ENCODE measurements at regions of chr5 and their contacts with region 1.

Region 1: DNA sequence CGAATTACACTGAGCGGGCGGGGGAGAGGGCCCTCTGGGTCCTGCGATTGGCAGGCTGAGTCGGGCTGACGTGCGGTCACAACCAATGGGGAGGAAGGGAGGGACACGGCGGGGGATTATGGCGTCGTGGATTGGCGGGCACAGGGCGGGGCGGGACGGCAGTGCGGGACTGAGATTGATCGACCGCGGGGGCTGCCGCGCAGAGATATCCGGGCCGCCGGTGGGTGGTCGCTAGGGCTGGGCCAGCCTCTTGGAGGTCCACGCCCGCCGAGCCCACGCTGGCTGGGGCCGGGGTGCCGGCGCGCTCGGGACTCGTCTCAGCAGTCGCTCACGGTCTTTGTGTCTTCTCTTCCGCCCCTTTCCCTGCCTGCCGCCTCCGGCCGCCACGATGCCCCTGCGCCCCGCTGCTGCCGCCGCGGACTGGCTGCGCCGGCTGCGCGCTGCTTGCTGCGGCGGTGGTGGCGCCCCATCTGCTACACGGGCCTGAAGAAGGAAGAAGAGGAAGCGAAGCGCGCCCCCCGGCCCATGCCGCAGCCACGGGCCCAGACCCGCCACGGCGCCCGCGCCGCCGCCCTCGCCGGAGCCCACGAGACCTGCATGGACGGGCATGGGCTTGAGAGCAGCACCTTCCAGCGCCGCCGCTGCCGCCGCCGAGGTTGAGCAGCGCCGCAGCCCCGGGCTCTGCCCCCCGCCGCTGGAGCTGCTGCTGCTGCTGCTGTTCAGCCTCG is at the start of gene RGMB:
- DNase-seq: peak; percentile 96
- H3K4me3 Mint-ChIP-seq: peak within 1 kb of the TSS; percentile 99
- H3K27ac Mint-ChIP-seq: peak within 1 kb of the TSS; percentile 77
- H3K4me1 Mint-ChIP-seq: peaks cover 36% of the 10 kb centered on the region
- H3K27me3 Mint-ChIP-seq: peaks cover 10% of the 10 kb centered on the region
- total RNA-seq, gene RGMB: 5.0 to 5.9 TPM

Region 2: DNA sequence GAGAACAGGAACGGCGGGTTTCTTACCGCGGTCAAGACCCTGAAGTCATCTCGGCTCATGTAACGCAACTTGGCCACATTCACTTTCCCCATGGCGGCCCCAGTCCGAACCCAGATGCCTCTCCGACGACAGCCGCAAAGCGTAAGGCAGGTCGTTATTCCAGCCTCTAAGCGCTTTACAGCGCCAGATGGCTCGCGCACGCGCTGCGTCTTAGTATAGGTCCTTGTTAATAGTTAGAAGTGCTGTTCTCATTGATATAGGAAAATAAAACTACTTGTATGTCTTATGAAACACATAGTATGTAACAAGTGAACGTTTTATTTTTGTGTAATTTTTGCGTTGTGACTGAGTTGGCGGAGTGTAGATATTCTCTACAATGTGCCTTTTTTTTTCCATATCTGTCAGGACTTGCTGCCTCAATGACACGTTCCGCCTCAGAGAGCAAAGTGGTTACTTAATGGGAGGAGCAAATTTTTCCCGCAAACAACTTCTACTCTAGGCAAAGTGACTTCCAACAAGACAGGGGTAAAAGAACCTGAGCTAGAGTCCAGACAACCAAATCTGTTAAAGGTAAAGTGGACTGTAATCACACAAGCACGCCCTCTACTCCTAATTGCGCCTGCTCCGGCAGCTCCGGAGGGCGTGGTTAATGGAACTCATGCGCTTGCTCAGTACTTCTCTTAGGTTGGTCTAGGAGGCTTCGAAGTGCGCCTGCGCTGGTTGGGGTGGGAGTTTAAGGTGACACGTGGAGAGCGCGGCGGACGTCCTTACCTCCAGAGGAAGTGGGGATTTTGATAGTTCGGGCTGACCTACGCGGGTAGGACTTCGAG is 1590.3 kb before region 1 on chr5 and contains the start of gene RIOK2:
- CTCF ChIA-PET with region 1: interaction called, 4 read pairs
- intact Hi-C with region 1: loop called (anchors 1 kb)
- DNase-seq: peak; percentile 97
- H3K4me3 Mint-ChIP-seq: peak within 1 kb of the TSS; percentile 93
- H3K27ac Mint-ChIP-seq: peak within 1 kb of the TSS; percentile 99
- H3K4me1 Mint-ChIP-seq: peaks cover 33% of the 10 kb centered on the region
- H3K27me3 Mint-ChIP-seq: no peaks in the 10 kb centered on the region
- total RNA-seq, gene RIOK2: 29.1 to 32.0 TPM

Region 3: DNA sequence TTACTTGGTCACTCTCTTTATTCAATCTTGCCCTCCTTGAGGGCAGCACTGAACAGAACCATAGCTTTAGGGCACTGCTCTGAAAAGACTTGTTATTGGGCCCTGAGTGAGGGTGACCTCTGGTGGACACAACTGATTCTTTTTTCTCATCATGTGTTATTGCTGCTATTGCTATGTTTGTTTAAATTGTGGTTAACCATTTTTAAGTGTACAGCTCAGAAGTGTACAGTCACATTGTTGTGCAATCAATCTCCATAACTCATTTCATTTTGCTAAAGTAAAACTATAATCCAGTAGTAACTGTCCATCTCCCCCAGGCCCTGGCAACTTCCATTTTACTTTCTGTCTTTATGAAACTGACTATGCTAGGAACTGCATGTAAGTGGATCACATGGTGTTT is 1239.5 kb before region 1 on chr5:
- CTCF ChIA-PET with region 1: no interaction called
- intact Hi-C with region 1: loop called (anchors 5 kb)
- DNase-seq: peak; percentile 18
- H3K4me3 Mint-ChIP-seq: no peak overlapping the region
- H3K27ac Mint-ChIP-seq: no peak overlapping the region
- H3K4me1 Mint-ChIP-seq: no peaks in the 10 kb centered on the region
- H3K27me3 Mint-ChIP-seq: no peaks in the 10 kb centered on the region

Region 4: GRCh38 chr5:98069876-98070512 is 703.6 kb before region 1 on chr5:
- CTCF ChIA-PET with region 1: no interaction called
- intact Hi-C with region 1: loop called (anchors 5 kb)
- DNase-seq: no peak
- H3K4me3 Mint-ChIP-seq: no peak overlapping the region
- H3K27ac Mint-ChIP-seq: no peak overlapping the region
- H3K4me1 Mint-ChIP-seq: peaks cover 8% of the 10 kb centered on the region
- H3K27me3 Mint-ChIP-seq: peaks cover 6% of the 10 kb centered on the region

Region 5: GRCh38 chr5:98349251-98349995 is 424.2 kb before region 1 on chr5:
- CTCF ChIA-PET with region 1: no interaction called
- intact Hi-C with region 1: no loop called
- DNase-seq: no peak
- H3K4me3 Mint-ChIP-seq: no peak overlapping the region
- H3K27ac Mint-ChIP-seq: no peak overlapping the region
- H3K4me1 Mint-ChIP-seq: no peaks in the 10 kb centered on the region
- H3K27me3 Mint-ChIP-seq: peaks cover 2% of the 10 kb centered on the region

Region 6: GRCh38 chr5:98796197-98796972 is 22.8 kb after region 1 on chr5:
- CTCF ChIA-PET with region 1: interaction called, 155 read pairs
- intact Hi-C with region 1: loop called (anchors 1 kb)
- DNase-seq: peak; percentile 79
- H3K4me3 Mint-ChIP-seq: no peak overlapping the region
- H3K27ac Mint-ChIP-seq: no peak overlapping the region
- H3K4me1 Mint-ChIP-seq: peaks cover 1% of the 10 kb centered on the region
- H3K27me3 Mint-ChIP-seq: no peaks in the 10 kb centered on the region

Region 7: GRCh38 chr5:99032234-99033013 is 258.8 kb after region 1 on chr5:
- CTCF ChIA-PET with region 1: interaction called, 3 read pairs
- intact Hi-C with region 1: loop called (anchors 1 kb)
- DNase-seq: peak; percentile 75
- H3K4me3 Mint-ChIP-seq: peak overlapping the region; percentile 72
- H3K27ac Mint-ChIP-seq: peak overlapping the region; percentile 84
- H3K4me1 Mint-ChIP-seq: peaks cover 72% of the 10 kb centered on the region
- H3K27me3 Mint-ChIP-seq: no peaks in the 10 kb centered on the region

Measured in activated naive CD4-positive, alpha-beta T cell treated with anti-CD3 and anti-CD28 coated beads for 36 hours (primary cell).